B cell (primary cell): ENCODE measurements at regions of chr20 and their contacts with region 1.

Region 1: DNA sequence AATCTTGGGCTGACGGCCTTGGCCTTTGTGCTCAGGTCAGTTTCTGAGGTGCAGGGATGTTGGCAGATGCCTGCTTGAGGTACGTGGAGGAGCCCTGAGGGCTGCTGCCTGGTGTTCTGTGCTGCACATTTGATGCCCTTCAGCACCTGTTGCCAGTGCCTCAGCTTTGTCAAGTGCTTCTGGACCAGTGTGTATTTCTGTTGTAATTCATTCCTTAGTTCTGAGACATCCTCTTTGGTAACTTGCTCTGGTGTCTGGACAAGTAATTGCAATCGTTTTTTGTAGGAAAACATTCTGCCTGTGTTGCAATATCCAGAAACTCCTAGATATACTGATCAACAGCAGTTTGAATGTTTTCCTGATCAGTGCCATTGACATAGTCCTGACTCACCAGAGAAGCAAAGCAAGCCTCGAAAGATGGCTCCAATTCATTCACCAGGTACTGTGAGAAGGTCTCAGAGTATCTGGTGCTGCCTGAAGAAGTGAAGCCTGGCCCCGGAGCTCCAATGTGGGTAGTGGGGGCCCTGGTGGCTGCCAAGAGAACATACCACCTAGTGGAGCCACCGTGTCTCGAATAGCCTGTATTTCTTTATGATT is 26.7 kb downstream of the ZNF337 start:
- DNase-seq: no peak
- ATAC-seq: no peak
- H3K4me3 ChIP-seq: no peak overlapping the region
- H3K4me3 Mint-ChIP-seq: no peak overlapping the region
- H3K27ac ChIP-seq: no peak overlapping the region
- H3K27ac Mint-ChIP-seq: no peak overlapping the region
- H3K4me1 ChIP-seq: no peaks in the 10 kb centered on the region
- H3K4me1 Mint-ChIP-seq: no peaks in the 10 kb centered on the region
- H3K27me3 ChIP-seq: no peaks in the 10 kb centered on the region
- H3K27me3 Mint-ChIP-seq: no peaks in the 10 kb centered on the region
- CTCF ChIP-seq: no peak

Region 2: DNA sequence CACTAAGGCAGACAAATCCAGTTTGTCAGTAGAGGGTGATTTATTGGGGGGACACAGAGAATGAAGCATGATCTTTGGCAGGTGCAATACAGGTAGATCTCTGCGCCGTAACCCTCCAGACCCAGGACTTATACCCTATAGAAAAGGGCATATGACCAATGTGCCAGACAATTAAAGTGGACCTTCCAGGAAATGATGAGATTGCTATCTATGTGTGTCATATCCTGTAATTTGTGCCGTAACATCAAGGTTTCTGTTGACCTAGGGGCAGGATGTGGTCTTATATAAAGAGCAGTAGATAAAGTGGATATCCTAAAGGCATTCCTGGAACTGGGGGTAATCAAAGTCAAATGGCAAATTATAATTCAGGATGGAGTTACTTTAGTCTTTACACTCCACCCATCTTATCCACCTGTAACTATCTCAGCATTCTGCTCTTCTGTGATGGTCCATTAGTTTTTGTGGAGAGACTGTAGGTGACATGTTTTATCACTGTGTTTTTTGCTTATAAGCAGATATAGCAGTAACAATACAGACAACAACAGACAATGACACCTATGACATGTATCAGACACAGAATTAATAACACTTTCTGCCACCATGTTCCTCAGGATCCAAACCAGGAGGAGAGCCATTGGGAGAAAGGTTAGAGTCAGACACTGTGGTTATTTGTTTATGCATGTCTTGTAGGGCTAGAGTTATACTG is 69.8 kb after region 1 on chr20:
- CTCF ChIA-PET with region 1: no interaction called
- POLR2A ChIA-PET with region 1: no interaction called
- intact Hi-C with region 1: loop called (anchors 10 kb)
- DNase-seq: no peak
- ATAC-seq: no peak
- H3K4me3 ChIP-seq: no peak overlapping the region
- H3K4me3 Mint-ChIP-seq: no peak overlapping the region
- H3K27ac ChIP-seq: no peak overlapping the region
- H3K27ac Mint-ChIP-seq: no peak overlapping the region
- H3K4me1 ChIP-seq: no peaks in the 10 kb centered on the region
- H3K4me1 Mint-ChIP-seq: no peaks in the 10 kb centered on the region
- H3K27me3 ChIP-seq: no peaks in the 10 kb centered on the region
- H3K27me3 Mint-ChIP-seq: no peaks in the 10 kb centered on the region
- CTCF ChIP-seq: no peak